ENCODE measurements at regions of chr5 and their contacts with region 1.

Region 1: GRCh38 chr5:65382582-65382981 is 99.1 kb downstream of the ADAMTS6 start:
- DNase-seq: no peak
- H3K4me3 ChIP-seq: no peak overlapping the region
- CTCF ChIP-seq: no peak

Region 2: DNA sequence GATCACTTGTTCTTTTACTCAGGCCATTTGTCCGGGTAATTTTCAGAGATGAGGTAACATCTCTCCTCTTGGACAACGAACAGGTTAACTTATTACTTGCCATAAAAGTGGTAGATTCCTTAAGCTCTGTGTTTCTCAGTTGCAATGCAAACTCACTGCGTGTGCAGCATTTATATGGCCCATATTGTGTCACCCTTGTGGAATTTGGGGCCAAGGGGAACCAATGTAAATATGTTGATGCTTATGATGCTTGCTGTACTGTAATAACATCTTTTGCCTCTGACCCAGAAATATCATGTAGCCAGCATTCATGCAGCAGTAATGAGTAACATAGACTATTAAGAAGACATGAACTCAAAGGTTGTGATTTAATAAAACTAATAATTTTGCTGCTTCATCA is 76.7 kb before region 1 on chr5:
- in situ Hi-C with region 1: no loop called
- DNase-seq: no peak
- H3K4me3 ChIP-seq: no peak overlapping the region
- CTCF ChIP-seq: no peak

Region 3: DNA sequence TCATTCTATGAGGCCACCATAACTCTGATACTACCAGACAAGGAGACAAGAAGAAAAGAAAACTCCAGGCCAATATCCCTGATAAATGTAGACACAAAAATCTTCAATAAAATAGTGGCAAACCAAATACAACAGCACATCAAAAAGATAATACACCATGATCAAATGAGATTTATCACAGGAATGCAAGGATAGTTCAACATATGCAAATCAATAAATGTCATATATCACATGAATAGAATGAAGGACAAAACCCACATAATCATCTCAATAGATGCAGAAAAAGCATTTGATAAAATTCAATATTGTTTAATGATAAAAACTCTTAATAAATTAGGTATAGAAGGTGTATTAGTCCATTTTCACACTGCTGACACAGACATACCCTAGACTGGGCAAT is 40.7 kb before region 1 on chr5:
- in situ Hi-C with region 1: loop called (anchors 5 kb)
- DNase-seq: no peak
- H3K4me3 ChIP-seq: no peak overlapping the region
- CTCF ChIP-seq: no peak